Ovary (tissue), 10 donors: ENCODE measurements at regions of chr22 and their contacts with region 1.

Region 1: GRCh38 chr22:17773606-17774205 is 563 bp downstream of the BID start:
- DNase-seq: peak in 2 of 5 donors; percentile 52 to 57
- H3K4me3 ChIP-seq: peak overlapping the region; percentile 46
- H3K27ac ChIP-seq: peak overlapping the region in 1 of 2 donors; percentile 15
- H3K4me1 ChIP-seq: peaks cover 5% of the 10 kb centered on the region
- H3K27me3 ChIP-seq: no peaks in the 10 kb centered on the region
- CTCF ChIP-seq: no peak
- EP300 ChIP-seq: no peak
- POLR2A ChIP-seq: no peak

Region 2: DNA sequence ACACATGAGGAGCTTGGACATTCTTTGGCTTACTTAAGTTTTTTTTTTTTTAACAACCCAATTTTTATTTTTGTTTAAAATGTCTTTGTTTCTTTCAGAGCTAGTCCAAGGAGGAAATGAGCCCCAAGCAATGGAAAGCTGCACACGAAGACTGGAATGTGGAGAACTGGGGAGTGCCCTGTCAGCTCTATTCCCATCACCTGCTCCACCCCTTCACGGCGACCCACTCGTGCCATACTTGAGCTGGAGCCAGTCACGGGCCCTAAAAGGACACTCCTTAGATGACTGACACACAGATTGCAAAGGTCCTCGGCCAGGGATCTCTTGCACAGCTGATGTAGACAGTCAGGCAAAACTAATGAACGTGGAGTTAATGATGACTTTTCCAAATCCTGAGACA is 221.0 kb before region 1 on chr22:
- intact Hi-C with region 1: loop called in 1 of 4 experiments (anchors 10 kb)
- DNase-seq: no peak
- H3K4me3 ChIP-seq: no peak overlapping the region
- H3K27ac ChIP-seq: no peak overlapping the region
- H3K4me1 ChIP-seq: no peaks in the 10 kb centered on the region
- H3K27me3 ChIP-seq: no peaks in the 10 kb centered on the region
- CTCF ChIP-seq: no peak
- EP300 ChIP-seq: no peak
- POLR2A ChIP-seq: no peak